ENCODE measurements at regions of chr5 and their contacts with region 1.

Region 1: GRCh38 chr5:148957591-148958202 is 105.2 kb downstream of the SH3TC2 start:
- DNase-seq: peak; percentile 54 to 69
- ATAC-seq: peak; percentile 71 to 91 (median 87)
- H3K4me3 ChIP-seq: no peak overlapping the region
- H3K4me3 Mint-ChIP-seq: no peak overlapping the region
- H3K27ac ChIP-seq: no peak overlapping the region
- H3K27ac Mint-ChIP-seq: peak overlapping the region in 1 of 2 donors; percentile 37
- H3K4me1 ChIP-seq: peaks cover 11% of the 10 kb centered on the region
- H3K4me1 Mint-ChIP-seq: peaks cover 25 to 28% of the 10 kb centered on the region in 2 donors
- H3K27me3 ChIP-seq: no peaks in the 10 kb centered on the region
- H3K27me3 Mint-ChIP-seq: no peaks in the 10 kb centered on the region
- CTCF ChIP-seq: peak; percentile 97

Region 2: DNA sequence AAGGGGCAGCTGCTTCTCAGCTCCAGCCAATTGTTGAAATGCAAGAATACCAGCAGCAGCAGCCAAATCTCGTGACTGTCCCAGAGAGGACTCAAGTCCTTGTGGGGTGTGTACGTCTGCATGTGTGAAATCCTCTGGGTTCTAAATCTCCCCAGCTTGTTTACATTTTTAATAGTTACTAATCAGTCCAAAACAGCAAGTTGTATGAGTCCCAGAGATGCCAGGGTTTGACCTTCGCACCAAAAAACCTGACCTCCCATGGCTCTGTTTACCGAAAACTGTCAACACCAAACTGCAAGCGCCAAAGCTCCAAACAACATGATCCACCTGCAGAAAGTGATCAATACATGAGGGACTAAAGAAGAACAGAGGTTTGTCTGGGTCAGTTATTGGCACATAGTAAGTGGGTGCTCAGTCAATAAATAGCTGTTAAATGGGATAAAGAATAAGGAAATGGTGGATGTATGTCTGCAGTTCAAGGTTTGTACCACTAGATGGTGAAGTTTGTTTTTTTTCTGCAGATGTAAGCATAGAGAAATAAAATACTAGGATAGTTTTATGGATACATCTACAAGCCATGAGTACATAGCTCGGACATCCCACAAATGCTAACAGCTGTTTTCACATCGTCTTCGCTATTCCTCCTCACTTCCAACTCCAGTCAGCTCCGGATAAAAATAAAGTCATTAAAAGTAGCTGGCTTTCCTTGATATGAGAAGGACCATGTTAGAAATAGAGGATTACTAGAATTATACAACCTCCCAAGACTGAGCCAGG is 216.5 kb before region 1 on chr5:
- intact Hi-C with region 1: loop called (anchors 1 kb)
- DNase-seq: peak in 1 of 2 donors; percentile 73
- ATAC-seq: peak in 2 of 3 donors; percentile 70 to 73
- H3K4me3 ChIP-seq: no peak overlapping the region
- H3K4me3 Mint-ChIP-seq: no peak overlapping the region
- H3K27ac ChIP-seq: no peak overlapping the region
- H3K27ac Mint-ChIP-seq: no peak overlapping the region
- H3K4me1 ChIP-seq: no peaks in the 10 kb centered on the region
- H3K4me1 Mint-ChIP-seq: no peaks in the 10 kb centered on the region
- H3K27me3 ChIP-seq: no peaks in the 10 kb centered on the region
- H3K27me3 Mint-ChIP-seq: peaks cover 5 to 7% of the 10 kb centered on the region in 2 donors
- CTCF ChIP-seq: peak; percentile 79

Region 3: DNA sequence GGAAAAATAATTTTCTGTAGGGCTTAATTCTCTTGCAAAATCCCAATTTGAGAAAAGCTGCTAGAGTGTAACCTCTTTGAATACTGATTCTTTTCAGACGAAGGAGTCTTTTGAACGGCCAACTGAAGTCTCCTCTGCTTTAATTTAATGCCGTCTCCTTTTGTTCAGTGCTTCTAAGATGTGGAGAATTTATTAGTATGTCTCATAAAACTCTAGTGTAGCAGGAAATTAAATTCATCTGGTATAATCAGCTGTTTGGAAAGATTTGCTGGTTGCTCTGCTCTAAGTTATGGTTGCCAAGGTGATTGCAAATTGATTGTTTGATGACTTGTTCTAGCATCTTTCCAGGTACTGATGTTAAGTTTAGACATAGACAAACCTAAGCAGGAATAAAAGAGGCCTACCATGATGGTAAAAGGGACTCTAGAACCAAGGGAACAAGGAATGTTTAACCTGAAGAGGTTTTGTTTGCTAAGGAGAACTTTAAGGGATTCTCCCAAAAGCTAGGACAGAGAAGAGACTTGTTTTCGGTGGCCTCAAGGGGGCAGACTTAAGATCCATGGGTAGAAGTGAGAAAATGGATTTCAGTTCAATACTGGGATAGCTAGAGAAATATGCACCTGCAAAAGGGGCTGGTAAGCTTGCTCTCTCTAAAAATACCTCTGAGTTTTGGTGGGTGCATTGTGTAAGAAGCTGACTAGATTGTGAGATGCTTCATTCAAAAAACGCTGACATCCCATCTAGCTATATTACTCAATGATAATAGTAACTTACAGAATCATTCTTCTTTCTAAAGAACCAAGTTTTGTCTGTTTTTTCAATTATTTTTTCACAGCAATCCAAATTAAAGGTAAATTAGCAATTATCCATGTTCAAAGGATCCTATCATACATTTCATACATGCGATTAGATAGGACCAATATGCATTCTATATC is 137.0 kb before region 1 on chr5:
- intact Hi-C with region 1: loop called (anchors 1 kb)
- DNase-seq: peak in 1 of 2 donors; percentile 70
- ATAC-seq: peak in 2 of 3 donors; percentile 57 to 73
- H3K4me3 ChIP-seq: no peak overlapping the region
- H3K4me3 Mint-ChIP-seq: no peak overlapping the region
- H3K27ac ChIP-seq: no peak overlapping the region
- H3K27ac Mint-ChIP-seq: no peak overlapping the region
- H3K4me1 ChIP-seq: peaks cover 11% of the 10 kb centered on the region
- H3K4me1 Mint-ChIP-seq: peaks cover 17 to 20% of the 10 kb centered on the region in 2 donors
- H3K27me3 ChIP-seq: no peaks in the 10 kb centered on the region
- H3K27me3 Mint-ChIP-seq: no peaks in the 10 kb centered on the region
- CTCF ChIP-seq: peak; percentile 71

Region 4: DNA sequence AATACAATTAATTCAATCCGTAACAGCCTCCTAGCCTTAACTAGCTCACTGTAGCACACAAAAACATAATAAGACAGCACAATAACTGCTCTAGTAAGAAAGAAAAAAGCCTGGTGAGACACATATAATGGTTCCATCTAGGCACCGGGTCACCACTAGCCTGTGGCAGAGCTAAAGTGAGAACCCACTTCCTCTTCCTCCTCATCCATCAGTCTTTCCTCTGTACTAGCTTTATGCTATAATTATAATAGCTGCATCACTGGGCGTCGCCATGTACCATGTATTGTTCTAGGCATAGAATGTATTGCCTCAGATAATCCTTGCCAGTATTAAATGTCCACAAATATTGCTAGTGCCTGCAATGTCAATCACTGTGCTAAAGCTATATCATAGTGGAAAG is 108.2 kb before region 1 on chr5:
- intact Hi-C with region 1: loop called (anchors 5 kb)
- DNase-seq: peak; percentile 54 to 77
- ATAC-seq: peak; percentile 52 to 82 (median 75)
- H3K4me3 ChIP-seq: no peak overlapping the region
- H3K4me3 Mint-ChIP-seq: peak overlapping the region; percentile 95
- H3K27ac ChIP-seq: peak overlapping the region; percentile 93
- H3K27ac Mint-ChIP-seq: peak overlapping the region; percentile 94 to 97
- H3K4me1 ChIP-seq: peaks cover 76% of the 10 kb centered on the region
- H3K4me1 Mint-ChIP-seq: peaks cover 89 to 90% of the 10 kb centered on the region in 2 donors
- H3K27me3 ChIP-seq: no peaks in the 10 kb centered on the region
- H3K27me3 Mint-ChIP-seq: no peaks in the 10 kb centered on the region
- CTCF ChIP-seq: no peak

Region 5: GRCh38 chr5:149367249-149367971 is 409.7 kb after region 1 on chr5:
- intact Hi-C with region 1: no loop called
- DNase-seq: peak in 1 of 2 donors; percentile 77
- ATAC-seq: peak; percentile 68 to 72 (median 71)
- H3K4me3 ChIP-seq: no peak overlapping the region
- H3K4me3 Mint-ChIP-seq: no peak overlapping the region
- H3K27ac ChIP-seq: no peak overlapping the region
- H3K27ac Mint-ChIP-seq: no peak overlapping the region
- H3K4me1 ChIP-seq: peaks cover 2% of the 10 kb centered on the region
- H3K4me1 Mint-ChIP-seq: no peaks in the 10 kb centered on the region
- H3K27me3 ChIP-seq: no peaks in the 10 kb centered on the region
- H3K27me3 Mint-ChIP-seq: no peaks in the 10 kb centered on the region
- CTCF ChIP-seq: peak; percentile 72